GM13977 (cell line): ENCODE measurements at regions of chr16 and their contacts with region 1.

Region 1: DNA sequence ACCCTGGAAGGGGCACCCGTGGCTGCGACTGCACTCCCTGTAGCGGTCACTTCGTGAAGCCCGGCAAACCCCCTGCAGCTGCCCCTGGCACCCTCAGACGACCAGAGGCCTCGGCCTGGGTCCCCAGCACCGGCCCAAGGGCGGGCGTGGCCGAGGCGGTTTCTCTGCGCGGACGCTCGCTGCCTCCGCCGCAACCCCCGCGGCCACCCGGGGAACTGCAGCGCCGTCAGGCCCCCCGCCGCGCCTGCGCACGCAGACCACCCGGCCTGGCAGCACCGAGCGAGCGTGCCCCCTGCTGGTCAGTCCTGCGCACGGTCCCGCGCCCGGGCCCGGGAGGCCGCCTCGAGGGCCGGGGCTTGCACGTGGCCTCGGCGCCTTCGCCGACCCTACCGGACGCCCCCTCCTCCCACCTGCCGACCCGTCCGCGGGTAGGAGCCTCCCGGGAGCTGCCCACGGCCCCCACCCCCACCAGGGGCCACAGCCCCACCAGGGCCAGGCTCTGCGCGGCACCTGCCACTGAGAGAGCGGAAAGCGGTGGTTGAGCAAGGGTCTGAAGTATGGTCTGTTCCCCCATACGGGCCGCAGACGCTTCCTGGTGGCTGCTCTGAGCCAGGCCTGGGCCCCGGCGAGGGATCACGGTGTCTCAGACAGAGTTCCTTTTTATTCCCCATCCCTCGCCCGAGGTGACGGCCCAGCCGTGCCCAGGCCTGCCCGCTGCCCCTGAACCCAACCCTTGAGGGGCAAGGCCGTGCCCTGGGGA is 11.5 kb upstream of the HS3ST6 start:
- DNase-seq: peak; percentile 98
- CTCF ChIP-seq: peak; percentile 99

Region 2: GRCh38 chr16:1863681-1864460 is 65.9 kb before region 1 on chr16:
- in situ Hi-C with region 1: loop called (anchors 10 kb)
- DNase-seq: no peak
- CTCF ChIP-seq: peak; percentile 30